IMR-90 (cell line): ENCODE measurements at regions of chr11 and their contacts with region 1.

Region 1: GRCh38 chr11:50030193-50030592 is 2.5 kb upstream of the OR4C45 start:
- DNase-seq: no peak
- ATAC-seq: no peak
- H3K4me3 ChIP-seq: no peak overlapping the region
- H3K27ac ChIP-seq: no peak overlapping the region
- H3K4me1 ChIP-seq: no peaks in the 10 kb centered on the region
- H3K27me3 ChIP-seq: no peaks in the 10 kb centered on the region
- CTCF ChIP-seq: no peak
- POLR2A ChIP-seq: no peak
- RAD21 ChIP-seq: no peak

Region 2: GRCh38 chr11:48354677-48355076 is 1675.5 kb before region 1 on chr11:
- CTCF ChIA-PET with region 1: no interaction called
- POLR2A ChIA-PET with region 1: no interaction called
- dilution Hi-C with region 1: no loop called
- in situ Hi-C with region 1: no loop called
- intact Hi-C with region 1: loop called (anchors 5 kb)
- DNase-seq: no peak
- ATAC-seq: no peak
- H3K4me3 ChIP-seq: no peak overlapping the region
- H3K27ac ChIP-seq: no peak overlapping the region
- H3K4me1 ChIP-seq: no peaks in the 10 kb centered on the region
- H3K27me3 ChIP-seq: no peaks in the 10 kb centered on the region
- CTCF ChIP-seq: no peak
- POLR2A ChIP-seq: no peak
- RAD21 ChIP-seq: no peak